Caco-2 (cell line): ENCODE measurements at regions of chr11 and their contacts with region 1.

Region 1: GRCh38 chr11:105202844-105203548 is 63.4 kb upstream of the CARD18 start:
- DNase-seq: peak; percentile 80 to 84
- H3K4me3 ChIP-seq: no peak overlapping the region
- H3K4me3 Mint-ChIP-seq: peak overlapping the region; percentile 48
- H3K27ac Mint-ChIP-seq: peak overlapping the region; percentile 80
- H3K4me1 ChIP-seq: peaks cover 61% of the 10 kb centered on the region
- H3K4me1 Mint-ChIP-seq: peaks cover 28% of the 10 kb centered on the region
- H3K27me3 ChIP-seq: no peaks in the 10 kb centered on the region
- H3K27me3 Mint-ChIP-seq: no peaks in the 10 kb centered on the region
- CTCF ChIP-seq: no peak

Region 2: DNA sequence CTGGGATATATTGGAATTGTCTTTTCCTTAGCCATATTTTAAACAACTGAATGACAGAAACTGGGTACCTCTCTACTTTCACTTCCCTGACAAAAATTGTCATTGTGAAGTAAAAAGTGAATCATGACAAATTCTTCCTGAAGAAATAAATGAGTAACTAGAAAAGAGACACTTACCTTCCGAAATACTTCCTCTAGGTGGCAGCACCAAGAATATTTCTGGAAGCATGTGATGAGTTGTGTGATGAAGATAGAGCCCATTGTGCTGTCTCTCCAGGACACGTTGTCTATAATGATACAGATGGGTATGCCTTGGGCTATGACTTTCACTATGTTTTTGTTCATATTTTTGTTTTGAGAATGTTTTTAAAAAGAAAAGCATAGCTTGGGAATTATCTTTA is 256.1 kb before region 1 on chr11:
- CTCF ChIA-PET with region 1: no interaction called
- POLR2A ChIA-PET with region 1: no interaction called
- intact Hi-C with region 1: loop called (anchors 2 kb)
- DNase-seq: peak in 1 of 2 experiments; percentile 72
- H3K4me3 ChIP-seq: no peak overlapping the region
- H3K4me3 Mint-ChIP-seq: no peak overlapping the region
- H3K27ac Mint-ChIP-seq: no peak overlapping the region
- H3K4me1 ChIP-seq: no peaks in the 10 kb centered on the region
- H3K4me1 Mint-ChIP-seq: peaks cover 6% of the 10 kb centered on the region
- H3K27me3 ChIP-seq: no peaks in the 10 kb centered on the region
- H3K27me3 Mint-ChIP-seq: no peaks in the 10 kb centered on the region
- CTCF ChIP-seq: peak; percentile 54 to 74

Region 3: GRCh38 chr11:104997288-104997687 is 205.7 kb before region 1 on chr11:
- CTCF ChIA-PET with region 1: no interaction called
- POLR2A ChIA-PET with region 1: no interaction called
- intact Hi-C with region 1: loop called (anchors 2 kb)
- DNase-seq: peak in 1 of 2 experiments; percentile 38
- H3K4me3 ChIP-seq: no peak overlapping the region
- H3K4me3 Mint-ChIP-seq: no peak overlapping the region
- H3K27ac Mint-ChIP-seq: no peak overlapping the region
- H3K4me1 ChIP-seq: peaks cover 8% of the 10 kb centered on the region; the same call in 1 of the 2 replicates
- H3K4me1 Mint-ChIP-seq: peaks cover 16% of the 10 kb centered on the region
- H3K27me3 ChIP-seq: no peaks in the 10 kb centered on the region
- H3K27me3 Mint-ChIP-seq: no peaks in the 10 kb centered on the region
- CTCF ChIP-seq: peak; percentile 29 to 46

Region 4: DNA sequence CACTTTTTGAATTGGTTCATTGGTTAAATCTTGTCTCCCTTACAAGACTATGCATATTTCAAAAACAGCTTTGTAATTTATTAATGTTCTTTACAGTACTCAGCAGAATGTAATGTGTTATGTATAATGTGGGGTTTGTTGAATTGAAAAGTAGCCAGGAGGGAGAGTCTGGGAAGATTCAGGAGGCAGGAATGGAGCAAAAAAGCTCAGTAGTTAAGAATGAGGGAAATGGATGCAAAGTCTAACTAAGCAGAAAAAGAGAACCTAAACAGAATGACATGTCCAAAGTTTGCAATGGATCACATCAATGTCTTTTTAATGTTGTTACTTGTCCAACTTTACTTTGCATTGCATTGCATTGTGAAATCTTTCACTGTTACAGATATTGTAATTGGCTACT is 23.1 kb after region 1 on chr11:
- CTCF ChIA-PET with region 1: no interaction called
- POLR2A ChIA-PET with region 1: no interaction called
- intact Hi-C with region 1: loop called (anchors 1 kb)
- DNase-seq: no peak
- H3K4me3 ChIP-seq: no peak overlapping the region
- H3K4me3 Mint-ChIP-seq: no peak overlapping the region
- H3K27ac Mint-ChIP-seq: no peak overlapping the region
- H3K4me1 ChIP-seq: peaks cover 32% of the 10 kb centered on the region
- H3K4me1 Mint-ChIP-seq: peaks cover 27% of the 10 kb centered on the region
- H3K27me3 ChIP-seq: no peaks in the 10 kb centered on the region
- H3K27me3 Mint-ChIP-seq: no peaks in the 10 kb centered on the region
- CTCF ChIP-seq: no peak

Region 5: DNA sequence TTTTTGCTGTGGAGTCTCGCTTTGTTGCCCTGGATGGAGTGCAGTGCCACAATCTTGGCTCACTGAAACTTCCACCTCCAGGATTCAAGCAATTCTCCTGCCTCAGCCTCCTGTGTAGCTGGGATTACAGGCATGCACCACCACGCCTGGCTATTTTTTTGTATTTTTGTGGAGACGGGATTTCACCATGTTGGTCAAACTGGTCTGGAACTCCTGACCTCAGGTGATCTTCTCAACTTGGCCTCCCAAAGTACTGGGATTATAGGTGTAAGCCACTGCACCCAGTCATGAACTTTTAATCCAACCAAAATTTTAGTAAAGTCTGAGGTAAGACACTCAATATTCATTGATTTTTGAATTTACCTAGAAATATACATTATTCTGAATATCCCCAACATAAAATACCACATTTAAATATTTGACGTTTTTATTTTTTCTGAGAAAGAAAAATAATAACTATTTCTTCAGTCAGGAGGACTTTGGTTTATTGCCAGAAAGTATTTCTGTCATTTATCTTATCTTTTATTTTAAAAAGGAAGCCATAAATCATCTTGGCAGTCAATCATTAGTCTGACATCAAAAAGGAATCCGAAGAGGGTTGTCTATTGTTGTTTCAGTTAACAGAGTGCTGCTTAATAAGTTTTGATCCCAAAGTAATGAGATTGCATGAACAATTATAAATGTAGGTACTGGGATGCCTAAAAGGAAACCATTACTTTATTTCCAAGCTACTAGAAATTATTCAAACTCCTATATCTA is 304.7 kb after region 1 on chr11:
- CTCF ChIA-PET with region 1: no interaction called
- POLR2A ChIA-PET with region 1: no interaction called
- intact Hi-C with region 1: loop called (anchors 1 kb)
- DNase-seq: peak; percentile 82 to 87
- H3K4me3 ChIP-seq: no peak overlapping the region
- H3K4me3 Mint-ChIP-seq: peak overlapping the region; percentile 43
- H3K27ac Mint-ChIP-seq: peak overlapping the region; percentile 59
- H3K4me1 ChIP-seq: peaks cover 37% of the 10 kb centered on the region
- H3K4me1 Mint-ChIP-seq: peaks cover 17% of the 10 kb centered on the region
- H3K27me3 ChIP-seq: no peaks in the 10 kb centered on the region
- H3K27me3 Mint-ChIP-seq: no peaks in the 10 kb centered on the region
- CTCF ChIP-seq: no peak